Lower leg skin (tissue), 4 donors: ENCODE measurements at regions of chr13 and their contacts with region 1.

Region 1: GRCh38 chr13:50074843-50075242 is 59.6 kb downstream of the KCNRG start:
- DNase-seq: no peak
- H3K4me3 ChIP-seq: no peak overlapping the region
- CTCF ChIP-seq: no peak
- POLR2A ChIP-seq: no peak

Region 2: DNA sequence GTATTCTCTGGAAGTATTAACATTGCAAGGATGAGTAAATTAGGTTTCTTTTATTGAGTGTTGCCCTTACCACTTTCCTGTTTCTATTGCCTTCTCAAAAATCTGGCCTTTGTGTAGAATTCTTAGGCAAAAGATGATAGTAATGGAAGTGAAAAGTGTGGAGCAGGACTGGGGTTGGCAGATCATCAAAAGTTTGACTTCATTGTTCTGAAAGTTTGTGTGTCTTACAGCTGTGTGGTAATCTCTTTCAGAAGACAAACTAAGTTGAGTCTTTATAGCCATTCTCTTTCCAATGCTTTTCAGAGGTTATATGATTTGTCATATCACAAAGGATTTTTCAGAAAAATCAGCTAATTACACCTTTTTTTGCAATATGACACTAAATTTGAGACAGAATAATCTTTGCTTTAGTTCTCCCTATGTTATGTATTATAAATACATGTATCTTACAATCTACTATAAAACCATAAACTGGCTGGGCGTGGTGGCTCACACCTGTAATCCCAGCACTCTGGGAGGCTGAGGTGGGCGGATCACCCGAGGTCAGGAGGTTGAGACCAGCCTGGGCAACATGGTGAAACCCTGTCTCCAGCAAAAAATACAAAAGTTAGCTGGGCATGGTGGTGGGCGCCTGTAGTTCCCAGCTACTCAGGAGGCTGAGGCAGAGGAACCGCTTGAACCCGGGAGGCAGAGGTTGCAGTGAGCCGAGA is 68.3 kb before region 1 on chr13:
- intact Hi-C with region 1: loop called (anchors 5 kb)
- DNase-seq: no peak
- H3K4me3 ChIP-seq: no peak overlapping the region
- CTCF ChIP-seq: no peak
- POLR2A ChIP-seq: no peak

Region 3: DNA sequence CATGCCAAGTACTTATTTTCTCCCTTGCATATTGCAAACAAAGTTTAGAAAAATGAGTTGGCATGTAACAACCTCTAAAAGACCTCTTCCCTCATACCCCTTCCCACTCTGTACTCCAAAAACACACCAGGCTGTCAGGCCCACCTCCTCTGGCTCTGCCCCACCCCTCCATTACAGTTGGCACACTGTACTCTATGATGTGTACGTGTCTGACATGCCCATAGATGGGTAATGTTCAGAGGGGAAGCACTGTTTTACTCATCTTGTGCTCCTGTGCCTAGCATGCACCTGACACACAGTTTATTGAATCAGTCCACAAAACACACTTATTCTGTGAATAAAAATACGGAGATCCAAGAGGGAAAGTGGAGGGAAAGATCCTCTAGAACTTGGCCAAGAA is 1310.3 kb after region 1 on chr13:
- intact Hi-C with region 1: no loop called
- DNase-seq: no peak
- H3K4me3 ChIP-seq: no peak overlapping the region
- CTCF ChIP-seq: no peak
- POLR2A ChIP-seq: no peak